Astrocyte of the cerebellum (primary cell): ENCODE measurements at regions of chr1 and their contacts with region 1.

Region 1: GRCh38 chr1:210057593-210057992 is 119.6 kb downstream of the SYT14 start:
- DNase-seq: no peak
- H3K4me3 ChIP-seq: no peak overlapping the region
- CTCF ChIP-seq: no peak

Region 2: DNA sequence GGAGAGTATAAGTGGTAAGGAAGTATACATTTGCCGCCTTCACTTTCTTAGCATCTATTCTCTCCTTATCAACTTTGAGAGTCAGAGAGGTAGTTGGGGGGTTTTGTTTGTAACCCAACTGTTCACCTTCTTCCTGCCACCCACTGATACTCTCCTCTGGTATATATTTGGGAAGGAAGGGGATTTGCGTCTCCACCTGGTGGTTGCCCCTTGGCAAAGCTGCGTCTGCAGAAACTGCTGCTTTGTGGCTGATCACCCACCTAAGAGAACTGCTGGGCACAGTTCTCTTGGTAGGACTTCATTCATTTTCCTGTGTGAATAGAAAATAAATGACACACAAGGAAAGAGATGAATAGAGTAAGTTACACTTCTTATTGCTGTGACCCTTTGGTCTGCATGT is 32.6 kb before region 1 on chr1:
- in situ Hi-C with region 1: loop called (anchors 5 kb)
- DNase-seq: no peak
- H3K4me3 ChIP-seq: no peak overlapping the region
- CTCF ChIP-seq: no peak

Region 3: DNA sequence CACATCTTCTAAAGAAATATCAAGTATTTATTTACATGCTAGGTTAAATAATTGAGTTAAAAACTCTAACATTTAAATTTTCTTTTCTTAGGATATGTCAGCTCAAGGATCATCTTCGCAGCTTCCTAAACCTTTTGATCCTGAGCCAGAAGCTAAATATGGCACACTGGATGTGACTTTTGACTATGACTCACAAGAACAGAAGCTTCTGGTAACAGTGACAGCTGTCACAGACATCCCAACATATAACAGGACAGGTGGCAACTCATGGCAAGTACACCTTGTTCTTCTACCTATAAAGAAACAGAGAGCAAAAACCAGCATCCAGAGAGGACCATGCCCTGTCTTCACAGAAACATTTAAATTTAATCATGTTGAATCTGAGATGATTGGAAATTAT is 42.3 kb after region 1 on chr1:
- in situ Hi-C with region 1: no loop called
- DNase-seq: no peak
- H3K4me3 ChIP-seq: no peak overlapping the region
- CTCF ChIP-seq: no peak